CD14-positive monocyte (primary cell): ENCODE measurements at regions of chr3 and their contacts with region 1.

Region 1: GRCh38 chr3:37168896-37169295 is 5.5 kb downstream of the LRRFIP2 start:
- DNase-seq: no peak
- H3K4me3 ChIP-seq: no peak overlapping the region
- H3K4me3 Mint-ChIP-seq: no peak overlapping the region
- H3K27ac ChIP-seq: no peak overlapping the region
- H3K27ac Mint-ChIP-seq: no peak overlapping the region
- H3K4me1 ChIP-seq: peaks cover 4 to 11% of the 10 kb centered on the region in 2 donors
- H3K4me1 Mint-ChIP-seq: peaks cover 27% of the 10 kb centered on the region
- H3K27me3 ChIP-seq: no peaks in the 10 kb centered on the region
- H3K27me3 Mint-ChIP-seq: no peaks in the 10 kb centered on the region
- CTCF ChIP-seq: no peak

Region 2: DNA sequence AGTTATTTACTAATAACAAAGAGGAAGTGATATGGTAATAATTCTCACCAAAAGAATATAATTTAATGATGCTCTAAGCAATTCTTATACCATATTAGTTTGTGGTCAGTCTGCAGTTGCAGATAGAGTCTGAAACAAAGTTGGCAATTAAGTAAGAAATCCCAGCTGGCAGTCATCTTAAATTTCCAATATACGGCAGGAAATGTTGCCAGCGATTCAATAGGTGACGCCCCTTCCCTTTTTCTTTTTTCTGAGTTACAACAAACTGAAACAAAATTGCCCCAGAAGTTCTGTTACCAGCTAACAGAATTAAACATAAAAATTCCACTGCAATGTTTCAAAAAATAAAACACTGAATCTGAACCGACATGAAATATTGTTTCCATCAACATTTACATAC is 21.2 kb before region 1 on chr3:
- intact Hi-C with region 1: loop called in 1 of 2 experiments (anchors 2 kb)
- DNase-seq: peak; percentile 54 to 80 (median 58)
- H3K4me3 ChIP-seq: peak overlapping the region; percentile 14 to 62 (median 39)
- H3K4me3 Mint-ChIP-seq: peak overlapping the region; percentile 52 to 71
- H3K27ac ChIP-seq: peak overlapping the region in 1 of 2 donors; percentile 99
- H3K27ac Mint-ChIP-seq: peak overlapping the region; percentile 87 to 99 (median 97)
- H3K4me1 ChIP-seq: peaks cover 46 to 56% of the 10 kb centered on the region in 2 donors
- H3K4me1 Mint-ChIP-seq: peaks cover 51% of the 10 kb centered on the region
- H3K27me3 ChIP-seq: no peaks in the 10 kb centered on the region
- H3K27me3 Mint-ChIP-seq: no peaks in the 10 kb centered on the region
- CTCF ChIP-seq: no peak